ENCODE measurements at regions of chr14 and their contacts with region 1.

Region 1: GRCh38 chr14:80954687-80955299 is 628 bp upstream of the TSHR start:
- DNase-seq: peak; percentile 60 to 79 (median 73)
- H3K4me3 ChIP-seq: peak overlapping the region; percentile 49 to 79 (median 58)
- H3K4me3 Mint-ChIP-seq: peak overlapping the region; percentile 84 to 95
- H3K27ac ChIP-seq: no peak overlapping the region
- H3K27ac Mint-ChIP-seq: peak overlapping the region in 2 of 7 donors; percentile 42 to 83
- H3K4me1 ChIP-seq: peaks cover 18 to 24% of the 10 kb centered on the region in 2 donors
- H3K4me1 Mint-ChIP-seq: peaks cover 34% of the 10 kb centered on the region
- H3K27me3 ChIP-seq: peaks cover 0 to 6% of the 10 kb centered on the region in 2 donors
- H3K27me3 Mint-ChIP-seq: peaks cover 6 to 14% (median 13%) of the 10 kb centered on the region in 3 donors
- CTCF ChIP-seq: peak; percentile 82

Region 2: GRCh38 chr14:81164167-81164774 is 209.5 kb after region 1 on chr14:
- intact Hi-C with region 1: loop called in 1 of 2 experiments (anchors 10 kb)
- DNase-seq: peak; percentile 38 to 74 (median 53)
- H3K4me3 ChIP-seq: no peak overlapping the region
- H3K4me3 Mint-ChIP-seq: no peak overlapping the region
- H3K27ac ChIP-seq: no peak overlapping the region
- H3K27ac Mint-ChIP-seq: peak overlapping the region in 3 of 7 donors; percentile 23 to 77 (median 26)
- H3K4me1 ChIP-seq: peaks cover 21 to 27% of the 10 kb centered on the region in 2 donors
- H3K4me1 Mint-ChIP-seq: peaks cover 32% of the 10 kb centered on the region
- H3K27me3 ChIP-seq: no peaks in the 10 kb centered on the region
- H3K27me3 Mint-ChIP-seq: peaks cover 0 to 2% (median 2%) of the 10 kb centered on the region in 3 donors
- CTCF ChIP-seq: peak; percentile 38

Region 3: DNA sequence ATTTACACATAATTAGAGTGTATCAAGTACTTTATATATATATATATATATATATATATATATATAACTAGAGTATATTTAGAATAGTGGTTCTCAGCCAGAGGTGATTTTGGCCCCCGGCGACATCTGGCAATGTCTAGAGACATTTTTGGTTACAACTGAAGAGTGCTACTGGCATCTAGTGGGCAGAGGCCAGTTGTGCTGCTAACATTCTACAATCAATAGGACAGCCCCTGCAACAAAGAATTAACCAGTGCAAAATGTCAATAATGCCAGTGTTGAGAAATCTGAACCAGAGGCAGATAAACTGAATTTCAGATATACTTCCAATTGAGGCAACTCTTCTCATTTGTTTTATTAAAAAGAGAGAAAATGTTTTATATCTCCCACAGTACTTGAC is 257.1 kb after region 1 on chr14:
- intact Hi-C with region 1: loop called in 1 of 2 experiments (anchors 2 kb)
- DNase-seq: peak; percentile 32 to 49 (median 47)
- H3K4me3 ChIP-seq: no peak overlapping the region
- H3K4me3 Mint-ChIP-seq: no peak overlapping the region
- H3K27ac ChIP-seq: no peak overlapping the region
- H3K27ac Mint-ChIP-seq: peak overlapping the region in 1 of 7 donors; percentile 25
- H3K4me1 ChIP-seq: peaks cover 21 to 23% of the 10 kb centered on the region in 2 donors
- H3K4me1 Mint-ChIP-seq: peaks cover 35% of the 10 kb centered on the region
- H3K27me3 ChIP-seq: no peaks in the 10 kb centered on the region
- H3K27me3 Mint-ChIP-seq: no peaks in the 10 kb centered on the region
- CTCF ChIP-seq: peak; percentile 64

Measured in CD14-positive monocyte (primary cell).